WTC11 (cell line): ENCODE measurements at regions of chr12 and their contacts with region 1.

Region 1: GRCh38 chr12:40946612-40947194 is 241.4 kb upstream of the PDZRN4 start:
- DNase-seq: no peak
- ATAC-seq: no peak
- H3K4me3 Mint-ChIP-seq: no peak overlapping the region
- H3K27ac Mint-ChIP-seq: no peak overlapping the region
- H3K4me1 Mint-ChIP-seq: no peaks in the 10 kb centered on the region; the same call in 1 of the 2 replicates
- H3K27me3 Mint-ChIP-seq: no peaks in the 10 kb centered on the region
- CTCF ChIP-seq: peak; percentile 52

Region 2: DNA sequence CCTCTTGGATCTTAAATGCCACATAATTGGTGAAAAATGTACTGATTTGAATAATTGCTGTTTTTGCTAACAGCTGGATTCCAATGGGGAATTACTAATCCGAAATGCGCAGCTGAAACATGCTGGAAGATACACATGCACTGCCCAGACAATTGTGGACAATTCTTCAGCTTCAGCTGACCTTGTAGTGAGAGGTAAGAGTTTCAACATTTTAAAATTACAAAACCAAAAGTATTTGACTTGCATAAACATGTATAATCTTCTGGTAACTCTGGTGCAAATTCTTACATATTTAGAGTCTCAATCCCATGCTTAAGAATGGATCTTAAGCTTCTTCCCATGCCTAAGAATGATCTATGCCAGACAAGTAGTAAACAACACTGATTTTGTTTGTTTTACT is 12.3 kb after region 1 on chr12:
- CTCF ChIA-PET with region 1: interaction called, 3 read pairs
- POLR2A ChIA-PET with region 1: interaction called, 11 read pairs
- DNase-seq: no peak
- ATAC-seq: no peak
- H3K4me3 Mint-ChIP-seq: no peak overlapping the region
- H3K27ac Mint-ChIP-seq: peak overlapping the region; percentile 48; the same call in 1 of the 2 replicates
- H3K4me1 Mint-ChIP-seq: peaks cover 5% of the 10 kb centered on the region; the same call in 1 of the 2 replicates
- H3K27me3 Mint-ChIP-seq: no peaks in the 10 kb centered on the region
- CTCF ChIP-seq: no peak

Region 3: GRCh38 chr12:40995862-40996521 is 49.3 kb after region 1 on chr12:
- CTCF ChIA-PET with region 1: no interaction called
- POLR2A ChIA-PET with region 1: interaction called, 10 read pairs
- DNase-seq: no peak
- ATAC-seq: peak; percentile 68
- H3K4me3 Mint-ChIP-seq: no peak overlapping the region
- H3K27ac Mint-ChIP-seq: no peak overlapping the region
- H3K4me1 Mint-ChIP-seq: peaks cover 4% of the 10 kb centered on the region
- H3K27me3 Mint-ChIP-seq: no peaks in the 10 kb centered on the region
- CTCF ChIP-seq: no peak